Heart right ventricle (tissue), 16 donors: ENCODE measurements at regions of chr3 and their contacts with region 1.

Region 1: DNA sequence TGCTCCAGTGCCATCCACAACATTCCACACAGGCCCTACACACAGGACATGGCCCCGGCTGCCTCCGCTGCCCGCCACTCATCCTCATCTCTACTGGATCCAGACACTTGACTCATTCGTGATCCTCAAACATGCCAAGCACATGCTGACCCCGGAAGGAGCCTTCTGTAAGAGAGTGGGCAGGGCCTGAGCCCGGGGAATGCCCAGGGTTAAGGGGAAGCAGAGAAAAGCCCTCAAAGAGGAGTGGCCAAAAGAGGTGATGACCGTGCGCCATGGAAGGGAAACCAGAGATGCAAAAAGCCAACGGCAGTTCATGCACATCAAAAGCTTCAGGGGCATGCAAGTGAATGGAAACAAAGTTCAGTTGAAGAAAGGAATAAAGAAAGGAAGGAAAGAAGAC is 46.1 kb downstream of the RFTN1 start:
- DNase-seq: no peak
- ATAC-seq: peak in 1 of 8 donors; percentile 24
- H3K4me3 ChIP-seq: no peak overlapping the region
- H3K27ac ChIP-seq: peak overlapping the region in 4 of 10 donors; percentile 17 to 65 (median 62)
- H3K4me1 ChIP-seq: peaks cover 7 to 86% (median 48%) of the 10 kb centered on the region in 9 donors
- H3K27me3 ChIP-seq: no peaks in the 10 kb centered on the region
- CTCF ChIP-seq: no peak

Region 2: DNA sequence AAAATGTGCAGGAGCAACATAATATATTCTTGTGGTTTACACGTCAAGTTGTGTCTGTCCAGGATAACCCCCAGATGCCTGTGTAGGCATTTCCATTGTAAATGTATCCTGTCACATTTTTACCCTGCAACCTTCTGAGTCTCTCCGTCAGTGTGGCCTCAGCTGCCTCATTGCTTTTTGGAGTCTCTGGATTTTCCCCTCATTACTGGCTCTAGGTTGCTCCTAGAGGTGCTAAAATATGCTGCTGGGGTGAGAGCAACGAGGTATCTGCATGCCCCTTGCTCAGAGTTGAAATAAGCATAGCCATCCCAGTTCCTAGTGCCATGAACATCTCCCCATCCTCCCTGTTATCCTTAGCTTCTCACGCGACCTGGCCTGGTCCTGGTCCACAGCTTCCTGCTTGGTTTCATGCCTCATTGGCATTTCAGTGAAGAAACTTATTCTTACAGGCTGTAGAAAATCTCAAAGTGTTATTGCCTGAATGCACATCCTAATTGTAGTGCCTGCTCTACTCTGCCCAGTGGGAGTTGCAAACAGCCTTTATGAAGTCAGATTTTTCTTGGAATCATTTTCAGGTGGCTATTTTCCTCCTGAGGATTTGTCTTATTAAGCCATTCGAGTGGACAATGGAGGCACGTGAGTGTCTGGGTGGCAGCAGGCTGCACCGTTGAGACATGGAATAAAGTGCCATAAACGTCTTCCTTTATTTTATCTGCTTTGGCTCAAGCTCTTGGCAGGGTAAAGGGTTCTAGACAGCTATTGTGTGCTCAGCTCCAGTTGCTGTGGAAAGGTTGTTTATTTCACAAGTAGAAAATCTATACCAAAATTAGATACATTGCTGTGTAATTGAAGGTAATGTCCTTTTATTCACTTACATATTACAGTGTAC is 169.2 kb before region 1 on chr3:
- intact Hi-C with region 1: loop called in 1 of 10 experiments (anchors 5 kb)
- DNase-seq: no peak
- ATAC-seq: peak in 6 of 8 donors; percentile 13 to 61 (median 42)
- H3K4me3 ChIP-seq: no peak overlapping the region
- H3K27ac ChIP-seq: no peak overlapping the region
- H3K4me1 ChIP-seq: peaks cover 0 to 48% (median 12%) of the 10 kb centered on the region in 9 donors
- H3K27me3 ChIP-seq: no peaks in the 10 kb centered on the region
- CTCF ChIP-seq: no peak

Region 3: DNA sequence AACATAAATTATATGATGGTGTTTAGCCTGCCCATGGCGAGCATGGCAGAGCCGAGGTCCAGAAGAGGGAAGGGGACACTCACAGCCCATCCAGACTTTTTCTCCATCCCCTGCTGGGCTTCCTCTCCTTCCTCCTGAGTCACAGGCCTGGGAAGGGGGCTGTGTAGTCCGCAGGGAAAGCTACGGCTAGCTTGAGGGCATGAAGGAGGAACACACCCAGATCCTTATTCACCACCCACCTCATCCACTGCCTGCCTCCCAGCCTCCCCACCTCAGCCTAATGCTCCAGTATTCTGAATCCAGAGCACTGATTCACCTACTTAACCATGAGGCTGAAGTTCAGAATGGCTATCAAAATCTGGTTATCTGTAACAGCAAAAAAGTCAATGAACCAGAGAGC is 104.6 kb before region 1 on chr3:
- intact Hi-C with region 1: loop called in 1 of 10 experiments (anchors 5 kb)
- DNase-seq: no peak
- ATAC-seq: no peak
- H3K4me3 ChIP-seq: no peak overlapping the region
- H3K27ac ChIP-seq: peak overlapping the region in 1 of 10 donors; percentile 73
- H3K4me1 ChIP-seq: peaks cover 3 to 81% (median 36%) of the 10 kb centered on the region in 9 donors
- H3K27me3 ChIP-seq: no peaks in the 10 kb centered on the region
- CTCF ChIP-seq: no peak

Region 4: DNA sequence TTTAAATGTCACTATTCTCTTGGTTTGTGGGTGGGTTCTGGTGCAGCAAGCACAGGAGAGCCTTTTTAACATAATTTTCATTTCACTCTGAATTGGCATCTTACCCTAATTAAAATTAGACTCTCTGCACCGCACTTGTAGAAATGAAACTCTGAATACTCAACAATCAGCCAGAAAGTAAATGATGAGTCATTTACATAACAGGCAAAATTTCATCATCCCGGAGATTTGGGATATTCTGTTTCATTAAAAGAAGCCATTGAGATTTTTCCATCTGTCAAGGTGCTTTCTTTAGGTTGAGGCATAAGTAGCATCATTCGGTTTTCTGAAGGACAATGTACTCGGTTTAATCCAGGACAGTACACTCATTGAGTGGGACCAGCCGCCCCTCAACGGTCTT is 64.9 kb before region 1 on chr3:
- intact Hi-C with region 1: no loop called
- DNase-seq: no peak
- ATAC-seq: no peak
- H3K4me3 ChIP-seq: no peak overlapping the region
- H3K27ac ChIP-seq: peak overlapping the region in 3 of 10 donors; percentile 21 to 71 (median 23)
- H3K4me1 ChIP-seq: peaks cover 7 to 58% (median 26%) of the 10 kb centered on the region in 9 donors
- H3K27me3 ChIP-seq: no peaks in the 10 kb centered on the region
- CTCF ChIP-seq: no peak